AG04449 (cell line): ENCODE measurements at regions of chr14 and their contacts with region 1.

Region 1: DNA sequence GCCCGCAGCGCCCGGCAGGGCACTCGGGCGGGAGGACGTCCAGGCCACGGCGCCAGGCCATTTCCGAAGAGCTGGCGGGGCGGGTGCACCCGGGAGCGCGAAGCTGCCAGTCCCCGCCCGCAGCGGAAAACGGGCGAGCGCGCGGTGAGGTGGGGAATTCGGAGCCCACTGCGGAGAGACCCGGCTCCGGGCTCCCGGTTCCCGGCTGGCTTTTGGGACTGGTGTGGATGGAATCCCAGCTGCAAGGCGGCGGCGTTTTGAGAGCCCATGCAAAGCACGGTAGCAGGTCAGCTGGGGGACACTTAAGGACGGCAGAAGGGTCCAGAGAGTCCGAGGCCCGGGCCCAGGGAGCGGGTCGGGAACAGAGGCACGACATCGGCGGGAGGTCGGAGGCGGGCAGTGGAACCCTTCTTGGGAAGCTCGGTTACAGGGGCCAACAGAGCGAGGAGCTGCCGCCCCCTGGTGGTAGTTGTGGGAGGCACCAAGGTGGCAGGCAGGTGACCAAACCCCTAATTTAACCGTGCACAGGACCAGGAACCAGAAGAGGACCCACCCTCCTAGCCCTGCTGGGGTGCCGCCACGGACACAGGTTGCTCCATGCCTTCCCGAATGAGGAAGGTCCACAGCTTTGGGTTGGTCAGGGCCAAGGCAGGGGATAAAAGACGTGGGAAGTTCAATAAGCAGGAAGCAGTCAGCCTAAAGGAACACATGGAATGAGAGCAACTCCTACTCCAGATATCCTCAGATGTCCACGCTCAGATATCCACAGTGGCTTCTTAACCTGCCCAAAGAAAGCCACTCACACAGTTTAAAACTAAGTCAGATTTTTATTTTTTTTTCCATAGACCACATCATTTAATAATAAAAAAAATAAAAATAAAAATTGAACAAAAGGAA is 685 bp upstream of the CDH24 start:
- DNase-seq: no peak
- H3K4me3 ChIP-seq: peak overlapping the region; percentile 60
- CTCF ChIP-seq: peak; percentile 94

Region 2: DNA sequence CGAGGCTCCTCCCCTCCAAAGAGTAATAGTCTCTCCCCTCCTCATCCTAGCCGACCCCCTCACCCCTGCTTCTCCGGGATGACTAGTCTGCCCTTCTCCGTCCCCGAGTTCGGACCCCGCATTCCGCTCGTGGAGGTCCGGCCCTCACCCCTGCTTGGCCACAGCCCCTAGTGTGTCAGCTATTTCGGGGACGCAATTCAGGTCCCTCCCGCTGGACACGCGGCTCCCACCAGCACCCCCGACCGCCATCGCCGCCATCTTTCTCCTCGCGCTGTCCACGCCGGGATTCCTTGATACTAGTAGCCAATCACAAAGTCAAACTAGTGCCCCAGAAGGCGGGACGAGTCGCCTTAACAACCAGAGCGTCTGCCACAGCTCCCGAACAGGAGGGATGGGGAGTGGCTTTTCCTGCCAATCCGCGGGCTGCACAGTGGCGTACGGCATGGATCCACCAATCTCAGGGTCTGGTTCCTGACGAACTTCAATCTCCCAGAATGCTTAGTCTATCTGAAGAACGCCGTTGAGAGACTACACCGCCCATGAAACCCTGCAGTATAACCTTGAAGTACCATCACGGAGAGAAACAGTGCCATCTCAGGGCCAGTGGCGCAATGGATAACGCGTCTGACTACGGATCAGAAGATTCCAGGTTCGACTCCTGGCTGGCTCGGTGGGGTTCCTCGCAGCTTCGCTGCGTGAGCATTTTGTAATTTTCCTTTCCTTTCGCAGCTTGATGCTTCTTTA is 128.7 kb before region 1 on chr14 and contains the start of gene PRMT5:
- CTCF ChIA-PET with region 1: interaction called, 28 read pairs
- POLR2A ChIA-PET with region 1: interaction called, 3 read pairs
- DNase-seq: peak; percentile 99
- H3K4me3 ChIP-seq: peak within 1 kb of the TSS; percentile 100
- CTCF ChIP-seq: no peak

Region 3: DNA sequence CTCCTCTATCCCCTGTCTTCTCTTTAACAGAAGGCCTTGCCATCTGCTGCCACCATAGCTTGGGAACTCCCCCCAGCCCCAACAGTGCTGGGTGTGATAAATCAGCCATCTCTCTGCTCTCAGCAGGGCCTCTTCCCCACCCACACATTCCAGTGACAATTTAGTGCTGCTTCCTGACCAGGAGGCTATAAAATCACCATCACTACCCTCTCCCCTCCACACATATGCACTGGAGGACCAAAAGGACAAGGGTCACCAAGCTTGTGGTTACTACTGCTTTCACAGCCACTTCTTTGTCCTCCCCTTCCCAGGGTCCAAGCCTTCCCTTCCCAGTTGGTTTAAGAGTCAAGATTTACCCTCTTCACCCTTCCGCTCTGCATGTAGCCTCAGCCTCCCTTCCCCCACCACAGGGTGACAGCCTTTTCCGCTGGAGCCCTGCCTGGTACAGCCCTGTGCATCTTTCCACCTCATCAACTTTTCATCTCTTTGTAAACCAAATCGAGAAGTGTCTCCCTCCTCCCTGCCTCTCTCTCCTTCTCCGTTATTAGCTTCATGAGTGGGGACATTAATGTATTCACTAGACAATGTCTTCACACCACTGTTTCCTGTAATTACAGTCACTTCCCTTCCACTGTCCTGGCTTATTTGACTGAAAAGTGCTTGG is 32.7 kb before region 1 on chr14:
- CTCF ChIA-PET with region 1: interaction called, 15 read pairs
- POLR2A ChIA-PET with region 1: no interaction called
- DNase-seq: no peak
- H3K4me3 ChIP-seq: no peak overlapping the region
- CTCF ChIP-seq: no peak

Region 4: GRCh38 chr14:23047034-23047634 is 10.9 kb before region 1 on chr14:
- CTCF ChIA-PET with region 1: interaction called, 37 read pairs
- POLR2A ChIA-PET with region 1: no interaction called
- DNase-seq: no peak
- H3K4me3 ChIP-seq: no peak overlapping the region
- CTCF ChIP-seq: no peak

Region 5: GRCh38 chr14:23114669-23115491 is 56.9 kb after region 1 on chr14:
- CTCF ChIA-PET with region 1: interaction called, 187 read pairs
- POLR2A ChIA-PET with region 1: no interaction called
- DNase-seq: peak; percentile 97
- H3K4me3 ChIP-seq: 0 out of 2 replicates have a peak overlapping the region, but pooled peaks have one; percentile 20
- CTCF ChIP-seq: peak; percentile 7